Dorsolateral prefrontal cortex (tissue), 120 donors: ENCODE measurements at regions of chr2 and their contacts with region 1.

Region 1: DNA sequence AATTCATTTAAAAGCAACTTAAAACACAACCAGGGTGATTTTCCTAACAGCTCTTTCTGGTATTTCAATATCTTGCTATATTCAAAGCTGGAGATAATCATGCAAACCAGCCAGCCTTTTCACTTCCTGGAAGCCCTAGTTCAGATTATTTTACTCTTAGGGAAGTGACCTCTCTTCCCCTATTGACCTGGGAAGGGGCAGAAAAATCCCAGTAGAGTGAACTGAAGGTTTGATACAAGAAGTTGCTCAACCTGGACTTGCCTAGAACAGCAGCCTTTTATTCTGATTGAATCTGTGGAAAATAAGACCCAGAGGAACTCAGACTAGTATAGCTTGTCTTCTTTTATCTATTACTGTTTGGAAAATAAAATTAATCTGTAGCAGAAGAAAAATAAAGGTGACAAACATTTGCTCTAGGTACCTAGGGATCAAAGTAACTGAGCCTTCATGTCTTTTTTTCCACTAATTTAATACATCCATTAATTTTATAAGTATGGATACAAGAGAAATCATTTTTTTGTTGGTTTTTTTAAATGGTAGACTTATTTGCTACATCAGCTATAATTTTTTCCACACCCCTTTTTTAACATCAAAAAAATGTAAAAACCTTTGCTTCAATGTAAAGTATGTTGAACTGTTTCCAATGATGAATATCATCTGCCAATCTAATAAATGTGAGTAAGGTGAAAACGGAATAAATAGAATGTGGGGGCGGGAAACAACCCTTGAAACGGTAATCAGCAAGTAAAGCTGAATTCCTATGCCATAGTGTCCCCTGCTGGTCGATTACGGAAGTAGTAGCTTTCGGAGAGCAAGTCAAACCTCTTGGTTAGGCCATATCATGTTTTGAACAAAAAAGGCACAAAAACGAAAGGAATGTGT is 629.9 kb downstream of the NRXN1 start:
- DNase-seq: peak in 7 of 10 donors; percentile 35 to 76 (median 51)
- H3K4me3 ChIP-seq: no peak overlapping the region
- H3K27ac ChIP-seq: no peak overlapping the region
- H3K27me3 ChIP-seq: no peaks in the 10 kb centered on the region
- CTCF ChIP-seq: peak; percentile 59 to 96 (median 83)

Region 2: DNA sequence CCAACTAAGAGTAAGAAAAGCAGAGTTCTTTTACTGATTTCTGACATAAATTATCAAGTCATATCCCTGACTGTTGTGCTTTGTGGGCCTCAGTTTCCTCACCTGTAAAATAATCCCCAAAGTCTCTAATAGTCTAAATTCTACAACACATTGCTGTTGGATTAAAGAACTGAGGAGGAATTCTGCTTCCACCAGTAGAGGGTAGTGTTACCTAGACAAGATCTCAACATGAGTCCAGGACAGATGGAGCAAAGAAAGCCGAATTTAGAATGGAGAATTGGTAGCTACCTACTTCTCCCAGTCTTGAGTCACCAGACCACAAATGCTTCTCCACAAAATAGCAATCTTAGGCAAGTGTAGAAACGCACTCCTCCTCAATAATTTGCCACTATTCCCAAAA is 785.2 kb before region 1 on chr2:
- intact Hi-C with region 1: loop called in 1 of 2 experiments (anchors 10 kb)
- DNase-seq: no peak
- H3K4me3 ChIP-seq: no peak overlapping the region
- H3K27ac ChIP-seq: no peak overlapping the region
- H3K27me3 ChIP-seq: no peaks in the 10 kb centered on the region
- CTCF ChIP-seq: peak in 55 of 56 donors; percentile 40 to 72 (median 60)

Region 3: DNA sequence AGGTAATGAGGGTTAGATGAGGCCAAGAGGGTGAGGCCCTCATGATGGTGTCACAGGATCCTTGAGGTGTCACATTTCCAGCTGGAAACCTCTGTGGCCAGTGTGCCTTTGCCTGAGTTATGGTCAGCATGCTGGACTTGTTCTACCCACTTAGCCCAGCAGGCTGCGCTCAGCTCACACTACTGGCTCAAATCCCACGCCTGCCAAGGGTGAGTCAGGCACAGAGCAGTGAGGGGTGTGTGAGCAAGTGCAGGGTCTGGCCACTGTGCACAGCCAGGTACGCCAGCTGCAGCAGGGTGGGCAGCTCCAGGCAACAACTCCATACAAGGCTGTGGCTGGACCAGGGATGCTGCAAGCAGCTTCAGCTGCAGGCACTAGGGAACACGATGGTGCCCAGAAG is 631.1 kb before region 1 on chr2:
- intact Hi-C with region 1: loop called in 1 of 2 experiments (anchors 5 kb)
- DNase-seq: peak in 9 of 10 donors; percentile 5 to 71 (median 53)
- H3K4me3 ChIP-seq: peak overlapping the region in 1 of 59 donors; percentile 26
- H3K27ac ChIP-seq: no peak overlapping the region
- H3K27me3 ChIP-seq: no peaks in the 10 kb centered on the region
- CTCF ChIP-seq: peak in 53 of 56 donors; percentile 22 to 77 (median 54)

Region 4: DNA sequence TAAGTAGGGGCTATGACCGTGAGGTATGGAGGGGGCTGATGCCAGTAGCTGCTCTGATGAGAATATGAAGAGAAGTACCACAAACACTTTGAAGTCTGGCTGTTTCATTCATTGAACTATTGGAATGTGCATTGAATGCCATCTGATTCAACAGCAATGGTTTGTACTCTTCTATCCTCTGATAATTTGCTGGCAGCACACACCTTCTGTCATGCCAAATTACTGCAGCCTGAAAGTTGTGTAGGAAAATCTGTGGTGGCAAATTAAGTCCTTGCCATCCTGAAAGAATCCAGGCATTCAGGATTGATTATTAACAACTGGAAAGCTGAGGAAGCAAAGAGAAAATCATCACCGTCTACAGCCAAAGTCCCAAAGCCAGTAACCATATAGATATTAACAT is 81.3 kb before region 1 on chr2:
- intact Hi-C with region 1: no loop called
- DNase-seq: no peak
- H3K4me3 ChIP-seq: no peak overlapping the region
- H3K27ac ChIP-seq: no peak overlapping the region
- H3K27me3 ChIP-seq: no peaks in the 10 kb centered on the region
- CTCF ChIP-seq: no peak